ENCODE measurements at regions of chr10 and their contacts with region 1.

Region 1: DNA sequence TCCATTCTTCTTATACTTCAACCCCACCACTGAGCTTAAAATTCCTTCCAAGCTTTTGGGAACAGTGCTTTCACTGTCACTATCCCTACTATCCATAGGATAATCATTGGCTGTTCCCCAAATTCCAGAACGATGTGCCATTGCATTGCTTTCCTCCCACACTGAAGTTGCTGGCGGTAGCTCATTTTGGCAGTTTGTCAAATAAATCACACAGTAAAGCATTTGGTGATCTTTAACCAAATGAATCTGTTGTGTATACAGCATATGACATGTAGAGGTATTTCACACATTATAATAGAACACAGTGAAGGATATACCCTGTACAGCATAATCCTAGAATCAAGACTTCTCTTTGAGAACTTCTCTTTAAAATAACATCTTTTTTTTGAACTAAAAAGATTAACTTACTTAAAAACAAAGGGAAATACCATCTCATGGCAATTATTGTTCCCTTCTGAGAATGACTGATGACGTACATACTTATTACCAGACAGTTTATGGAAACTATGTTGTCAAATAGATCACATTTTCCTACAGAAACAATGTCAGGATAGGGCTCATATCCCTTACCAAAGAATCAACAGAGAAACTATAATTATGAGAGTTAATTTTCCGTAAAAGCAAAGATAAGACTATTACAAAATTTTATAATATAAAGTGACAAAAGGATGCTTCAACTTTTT is 93.6 kb downstream of the CTNNA3 start:
- DNase-seq: peak; percentile 64
- H3K4me3 ChIP-seq: no peak overlapping the region
- H3K27ac ChIP-seq: no peak overlapping the region
- H3K4me1 ChIP-seq: peaks cover 33% of the 10 kb centered on the region
- H3K27me3 ChIP-seq: no peaks in the 10 kb centered on the region
- CTCF ChIP-seq: no peak

Region 2: DNA sequence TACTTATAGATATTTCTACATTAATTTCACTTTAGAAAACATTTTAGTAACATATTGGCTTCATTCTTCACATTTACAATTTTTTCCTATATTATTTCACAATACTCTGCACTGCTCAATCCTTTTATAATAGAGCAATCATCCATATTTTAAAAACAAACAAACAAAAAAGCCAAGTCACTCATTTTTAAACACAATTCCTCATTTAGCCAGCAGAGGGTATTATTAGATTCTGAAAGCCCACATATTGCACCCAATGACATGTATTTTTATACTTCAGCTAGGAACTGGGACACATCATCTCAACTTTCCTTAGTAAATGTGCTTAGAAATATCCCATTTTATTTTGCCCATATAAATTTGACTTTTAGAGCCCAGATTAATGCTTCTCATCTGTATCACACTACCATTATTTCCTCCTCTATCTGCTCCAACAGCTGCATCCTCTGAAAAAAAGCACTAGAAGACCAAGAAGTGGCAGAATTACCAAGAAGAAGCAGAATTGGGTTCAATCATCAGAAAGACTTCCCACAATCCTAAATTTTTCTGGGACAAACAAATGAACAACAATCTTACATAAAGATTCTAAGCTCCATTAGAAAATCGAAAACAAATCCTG is 64.1 kb after region 1 on chr10:
- CTCF ChIA-PET with region 1: no interaction called
- dilution Hi-C with region 1: no loop called
- in situ Hi-C with region 1: no loop called
- intact Hi-C with region 1: no loop called
- DNase-seq: peak; percentile 6
- H3K4me3 ChIP-seq: no peak overlapping the region
- H3K27ac ChIP-seq: no peak overlapping the region
- H3K4me1 ChIP-seq: no peaks in the 10 kb centered on the region
- H3K27me3 ChIP-seq: no peaks in the 10 kb centered on the region
- CTCF ChIP-seq: peak; percentile 38 to 42

Region 3: DNA sequence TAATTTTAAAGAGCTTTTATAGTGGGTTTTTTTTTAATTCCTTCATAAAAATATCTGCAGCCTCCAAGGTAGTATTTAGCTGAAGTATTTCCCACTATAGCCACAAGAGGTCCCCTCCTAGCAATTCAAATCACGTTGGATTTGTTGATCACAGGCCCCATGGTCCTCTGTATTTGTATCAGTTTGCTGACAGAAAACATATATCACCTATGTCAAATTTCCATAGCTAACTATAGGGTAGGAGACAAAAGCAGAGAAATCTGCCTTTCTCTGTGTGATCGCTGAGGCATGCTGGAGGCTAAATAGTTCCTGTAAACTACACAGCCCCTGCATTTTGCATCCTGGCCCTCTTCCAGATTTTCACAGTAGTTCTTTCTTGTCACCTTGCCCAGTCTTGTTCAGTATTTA is 95.3 kb after region 1 on chr10:
- CTCF ChIA-PET with region 1: interaction called, 14 read pairs
- dilution Hi-C with region 1: no loop called
- in situ Hi-C with region 1: no loop called
- intact Hi-C with region 1: no loop called
- DNase-seq: peak; percentile 16
- H3K4me3 ChIP-seq: no peak overlapping the region
- H3K27ac ChIP-seq: no peak overlapping the region
- H3K4me1 ChIP-seq: no peaks in the 10 kb centered on the region
- H3K27me3 ChIP-seq: peaks cover 4% of the 10 kb centered on the region
- CTCF ChIP-seq: peak; percentile 59 to 70

Region 4: DNA sequence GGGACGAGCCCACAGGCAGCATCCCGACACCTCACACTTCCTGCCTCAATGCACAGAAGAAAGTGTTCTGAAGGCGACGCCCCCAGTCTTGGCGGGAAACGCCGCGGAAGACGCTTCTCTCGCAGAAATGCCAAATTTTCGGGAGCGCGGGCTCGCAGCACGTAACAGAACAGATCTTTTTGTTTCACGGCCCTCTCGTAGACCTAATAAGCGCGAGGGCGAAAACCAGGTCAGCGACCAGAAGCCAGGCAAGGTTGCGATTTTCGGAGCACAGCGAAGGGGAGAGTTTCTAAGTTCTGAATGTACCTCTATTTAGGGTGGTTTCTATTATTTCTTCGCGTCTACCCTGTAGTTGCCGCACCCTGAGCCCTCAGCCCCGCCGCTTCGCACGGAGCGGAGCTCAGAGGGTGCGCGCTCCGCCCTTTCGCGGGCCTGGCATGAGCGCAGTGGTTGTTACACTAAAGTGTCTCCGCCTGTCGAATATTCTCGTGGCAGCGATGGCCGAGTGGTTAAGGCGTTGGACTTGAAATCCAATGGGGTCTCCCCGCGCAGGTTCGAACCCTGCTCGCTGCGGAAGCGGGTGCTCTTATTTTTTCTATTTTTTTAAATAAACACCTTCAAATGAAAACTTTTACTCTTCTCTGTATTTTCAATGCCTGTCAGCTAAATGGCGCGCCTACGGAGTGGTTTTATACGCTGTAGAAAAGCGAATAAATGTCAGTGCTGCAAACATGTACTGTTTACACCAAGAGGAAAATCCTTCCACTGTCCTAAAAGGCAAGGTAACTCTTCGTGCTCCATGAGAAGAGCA is 161.8 kb after region 1 on chr10:
- CTCF ChIA-PET with region 1: no interaction called
- dilution Hi-C with region 1: no loop called
- in situ Hi-C with region 1: no loop called
- intact Hi-C with region 1: loop called (anchors 10 kb)
- DNase-seq: peak; percentile 90
- H3K4me3 ChIP-seq: peak overlapping the region; percentile 75 to 99 (median 82)
- H3K27ac ChIP-seq: peak overlapping the region; percentile 72
- H3K4me1 ChIP-seq: peaks cover 5% of the 10 kb centered on the region
- H3K27me3 ChIP-seq: no peaks in the 10 kb centered on the region
- CTCF ChIP-seq: no peak

Measured in mammary epithelial cell (primary cell).